PC-9 (cell line): ENCODE measurements at regions of chr6 and their contacts with region 1.

Region 1: DNA sequence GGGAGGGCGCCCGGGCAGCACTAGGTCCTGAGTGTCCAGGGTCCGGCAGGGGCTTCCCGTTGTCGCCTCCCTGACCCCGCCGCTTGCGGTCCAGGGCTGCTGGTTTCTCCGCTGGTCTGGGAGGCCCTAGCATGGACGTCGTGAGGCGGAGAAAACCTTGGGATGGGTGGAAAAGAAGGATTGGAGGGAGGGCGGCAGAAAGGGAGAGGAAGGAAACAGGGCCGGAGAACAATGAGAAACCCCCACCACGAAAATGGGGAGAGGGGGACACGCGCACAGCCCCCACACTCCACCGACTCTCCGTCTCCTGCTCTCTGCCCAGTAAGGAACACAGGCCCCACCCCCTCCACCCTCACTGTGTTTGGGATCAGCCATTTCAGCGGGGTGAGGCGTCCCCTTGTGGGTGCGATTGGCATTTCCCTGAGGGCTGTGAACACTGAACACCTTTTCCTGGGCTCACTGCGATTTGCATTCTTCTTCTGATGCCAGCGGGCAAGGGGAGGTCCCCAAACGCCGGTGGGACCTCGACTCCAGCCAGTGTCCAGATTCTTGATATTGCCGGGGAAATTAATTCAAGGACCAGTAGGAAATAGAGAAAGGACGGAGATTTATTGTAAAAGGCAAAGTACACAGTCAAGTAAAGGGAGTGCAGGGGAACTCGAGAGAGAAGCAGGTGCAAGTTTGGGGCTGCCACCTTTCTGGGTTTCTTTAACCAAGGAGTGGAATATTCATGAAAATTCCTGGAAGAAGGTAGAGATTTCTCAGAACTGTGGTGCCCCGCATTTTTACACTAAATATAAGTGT is 3.3 kb upstream of the RAET1G start:
- DNase-seq: peak; percentile 66 to 81
- H3K4me3 ChIP-seq: peak overlapping the region; percentile 62
- H3K27ac ChIP-seq: no peak overlapping the region
- H3K4me1 ChIP-seq: peaks cover 4% of the 10 kb centered on the region
- H3K27me3 ChIP-seq: no peaks in the 10 kb centered on the region
- CTCF ChIP-seq: peak; percentile 92

Region 2: GRCh38 chr6:149534742-149535141 is 391.4 kb before region 1 on chr6:
- CTCF ChIA-PET with region 1: no interaction called
- POLR2A ChIA-PET with region 1: no interaction called
- intact Hi-C with region 1: no loop called
- DNase-seq: no peak
- H3K4me3 ChIP-seq: no peak overlapping the region
- H3K27ac ChIP-seq: no peak overlapping the region
- H3K4me1 ChIP-seq: no peaks in the 10 kb centered on the region
- H3K27me3 ChIP-seq: no peaks in the 10 kb centered on the region
- CTCF ChIP-seq: no peak

Region 3: DNA sequence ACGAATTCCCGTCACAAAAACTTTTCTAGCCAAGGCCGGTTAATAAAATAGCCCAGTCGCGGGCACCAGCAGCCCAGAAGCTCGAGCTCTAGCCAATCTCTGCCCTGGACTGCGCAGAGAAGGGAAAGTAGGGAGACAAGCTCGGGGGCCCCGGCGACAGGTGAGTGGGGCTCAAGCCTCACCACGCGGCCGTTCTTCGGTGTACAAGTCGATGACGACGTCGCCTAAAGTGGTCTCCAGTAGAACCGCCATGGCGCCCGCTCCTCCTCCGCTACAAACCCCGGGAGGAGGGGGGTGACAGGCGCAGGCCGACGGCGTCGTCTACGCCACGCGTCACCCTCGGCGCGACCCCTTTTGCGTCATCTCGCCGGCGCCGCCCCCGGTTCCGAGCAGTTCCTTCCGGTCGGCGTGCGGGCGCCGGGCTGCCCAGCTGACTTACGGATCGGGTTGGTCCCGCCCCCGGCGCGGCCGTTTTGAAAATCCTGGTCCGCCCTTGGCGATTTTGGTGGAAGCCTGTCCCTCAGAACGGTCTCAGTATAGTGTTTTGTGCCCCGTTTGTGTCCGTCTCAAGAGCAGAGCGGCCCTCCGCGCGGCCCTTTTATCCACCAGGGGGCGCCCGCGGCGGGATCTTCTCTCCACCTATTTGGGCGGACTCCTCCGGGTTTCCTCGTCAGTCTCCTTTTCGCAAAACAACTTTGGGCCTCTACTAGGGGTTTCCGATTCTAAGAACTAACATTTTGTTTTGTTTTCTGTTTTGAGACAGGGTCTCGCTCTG is 380.2 kb before region 1 on chr6 and contains the start of gene PPIL4:
- CTCF ChIA-PET with region 1: interaction called, 5 read pairs
- POLR2A ChIA-PET with region 1: no interaction called
- intact Hi-C with region 1: loop called (anchors 5 kb)
- DNase-seq: peak; percentile 73 to 86
- H3K4me3 ChIP-seq: peak within 1 kb of the TSS; percentile 76
- H3K27ac ChIP-seq: peak within 1 kb of the TSS; percentile 84
- H3K4me1 ChIP-seq: peaks cover 13% of the 10 kb centered on the region
- H3K27me3 ChIP-seq: no peaks in the 10 kb centered on the region
- CTCF ChIP-seq: peak; percentile 98
- total RNA-seq, gene PPIL4: 9.6 and 13.5 TPM in 2 replicates

Region 4: GRCh38 chr6:149565527-149566409 is 360.4 kb before region 1 on chr6 and contains the start of gene GINM1:
- CTCF ChIA-PET with region 1: no interaction called
- POLR2A ChIA-PET with region 1: no interaction called
- intact Hi-C with region 1: loop called (anchors 5 kb)
- DNase-seq: peak; percentile 80 to 94
- H3K4me3 ChIP-seq: peak within 1 kb of the TSS; percentile 89
- H3K27ac ChIP-seq: peak within 1 kb of the TSS; percentile 72
- H3K4me1 ChIP-seq: peaks cover 30% of the 10 kb centered on the region
- H3K27me3 ChIP-seq: no peaks in the 10 kb centered on the region
- CTCF ChIP-seq: peak; percentile 71
- total RNA-seq, gene GINM1: 14.5 and 14.7 TPM in 2 replicates

Region 5: DNA sequence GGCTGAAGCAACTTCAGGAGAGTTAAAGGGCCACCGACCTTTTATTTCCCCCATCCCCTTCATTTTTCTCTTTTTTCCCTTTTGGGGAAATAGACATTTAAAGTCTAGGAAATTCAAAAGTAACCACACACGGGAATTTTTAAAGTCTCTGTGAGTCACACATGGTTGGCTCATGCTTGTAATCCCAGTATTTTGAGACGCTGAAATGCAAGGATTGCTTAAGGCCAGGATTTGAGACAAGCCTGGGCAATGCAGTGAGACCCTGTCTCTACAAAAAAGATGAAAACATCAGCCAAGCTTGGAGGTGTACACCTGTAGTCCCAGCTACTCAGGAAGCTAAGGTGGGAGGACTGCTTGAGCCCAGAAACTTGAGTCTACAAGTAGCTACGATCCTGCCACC is 311.8 kb before region 1 on chr6:
- CTCF ChIA-PET with region 1: no interaction called
- POLR2A ChIA-PET with region 1: no interaction called
- intact Hi-C with region 1: no loop called
- DNase-seq: no peak
- H3K4me3 ChIP-seq: no peak overlapping the region
- H3K27ac ChIP-seq: no peak overlapping the region
- H3K4me1 ChIP-seq: no peaks in the 10 kb centered on the region
- H3K27me3 ChIP-seq: no peaks in the 10 kb centered on the region
- CTCF ChIP-seq: no peak

Region 6: GRCh38 chr6:149701714-149702113 is 224.5 kb before region 1 on chr6:
- CTCF ChIA-PET with region 1: no interaction called
- POLR2A ChIA-PET with region 1: no interaction called
- intact Hi-C with region 1: no loop called
- DNase-seq: no peak
- H3K4me3 ChIP-seq: no peak overlapping the region
- H3K27ac ChIP-seq: no peak overlapping the region
- H3K4me1 ChIP-seq: no peaks in the 10 kb centered on the region
- H3K27me3 ChIP-seq: no peaks in the 10 kb centered on the region
- CTCF ChIP-seq: no peak

Region 7: DNA sequence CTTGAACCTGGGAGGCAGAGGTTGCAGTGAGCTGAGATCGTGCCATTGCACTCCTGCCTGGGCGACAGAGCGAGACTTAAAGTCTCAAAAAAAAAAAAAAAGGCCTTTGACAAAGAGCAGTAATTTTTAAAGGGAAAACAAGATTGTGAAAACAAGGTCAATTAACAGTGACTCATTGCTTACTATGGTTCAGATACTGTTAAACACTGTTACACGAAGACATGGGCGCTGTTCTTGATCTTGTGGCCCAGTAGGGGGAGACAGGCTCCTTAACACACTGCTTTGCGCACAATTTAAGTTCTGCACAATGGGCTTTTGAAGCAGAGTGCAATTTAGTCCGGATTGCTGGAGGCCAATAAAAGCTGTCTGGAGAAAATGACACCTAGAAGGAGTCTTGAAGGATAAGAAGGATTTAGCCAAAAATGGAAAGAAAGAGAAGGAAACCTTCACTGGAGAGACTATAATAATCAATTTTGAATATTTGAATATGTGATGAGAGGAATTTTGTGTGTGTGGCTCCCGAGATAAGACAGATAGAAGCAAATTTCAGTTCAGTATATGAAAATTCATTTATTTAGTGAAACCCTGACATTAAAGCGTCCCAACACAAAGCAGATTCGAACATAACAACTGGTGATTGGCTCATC is 202.3 kb before region 1 on chr6:
- CTCF ChIA-PET with region 1: interaction called, 4 read pairs
- POLR2A ChIA-PET with region 1: no interaction called
- intact Hi-C with region 1: loop called (anchors 5 kb)
- DNase-seq: peak; percentile 11 to 51
- H3K4me3 ChIP-seq: no peak overlapping the region
- H3K27ac ChIP-seq: no peak overlapping the region
- H3K4me1 ChIP-seq: 0 out of 2 replicates have a peak, but pooled peaks cover 5% of the 10 kb centered on the region
- H3K27me3 ChIP-seq: no peaks in the 10 kb centered on the region
- CTCF ChIP-seq: peak; percentile 66

Region 8: DNA sequence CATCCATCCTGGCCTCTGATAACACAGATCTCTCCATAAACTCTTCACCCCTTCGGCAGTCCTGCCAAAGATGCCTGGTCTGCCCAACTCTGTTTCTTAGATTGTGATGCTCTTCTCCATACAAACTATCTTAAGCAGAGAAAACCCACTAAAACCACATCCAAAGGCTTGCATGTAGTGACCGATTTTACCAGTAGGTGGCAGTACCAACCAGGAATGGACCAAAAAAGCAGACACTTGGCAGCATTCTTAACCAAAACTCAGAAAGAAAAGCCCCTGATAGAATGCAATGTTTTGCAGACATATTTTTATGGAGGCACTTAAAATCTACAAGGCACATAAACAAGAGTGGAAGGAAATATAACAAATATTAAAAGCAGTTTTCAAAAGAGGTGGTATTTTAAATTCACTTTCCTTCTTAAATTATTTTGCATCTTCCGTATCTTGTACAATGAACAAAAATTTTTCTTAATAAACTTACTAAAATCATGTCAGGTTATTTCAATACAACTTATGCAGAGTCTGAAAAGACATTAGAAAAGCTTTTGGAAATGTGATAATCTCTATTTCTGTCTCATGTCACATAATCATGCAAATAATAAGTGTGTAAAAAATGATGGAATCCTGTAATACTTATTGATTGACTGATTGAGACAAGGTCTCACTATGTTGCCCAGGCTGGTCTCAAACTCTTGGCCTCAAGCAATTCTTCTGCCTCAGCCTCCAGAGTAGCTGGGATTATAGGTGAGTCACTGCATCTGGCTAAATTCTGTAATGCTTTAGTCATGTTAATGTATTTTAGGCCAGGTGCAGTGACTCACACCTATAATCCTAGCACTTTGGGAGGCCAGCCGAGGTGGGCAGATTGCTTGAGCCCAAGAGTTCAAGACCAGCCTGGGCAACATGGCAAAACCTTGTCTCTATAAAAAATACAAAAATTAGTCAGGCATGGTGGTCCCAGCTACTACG is 91.4 kb before region 1 on chr6:
- CTCF ChIA-PET with region 1: no interaction called
- POLR2A ChIA-PET with region 1: no interaction called
- intact Hi-C with region 1: loop called (anchors 1 kb)
- DNase-seq: peak; percentile 48 to 79
- H3K4me3 ChIP-seq: no peak overlapping the region
- H3K27ac ChIP-seq: peak overlapping the region; percentile 45
- H3K4me1 ChIP-seq: no peaks in the 10 kb centered on the region
- H3K27me3 ChIP-seq: no peaks in the 10 kb centered on the region
- CTCF ChIP-seq: peak; percentile 96

Region 9: GRCh38 chr6:149840345-149841075 is 85.7 kb before region 1 on chr6:
- CTCF ChIA-PET with region 1: interaction called, 3 read pairs
- POLR2A ChIA-PET with region 1: interaction called, 3 read pairs
- intact Hi-C with region 1: loop called (anchors 1 kb)
- DNase-seq: peak; percentile 70 to 78
- H3K4me3 ChIP-seq: no peak overlapping the region
- H3K27ac ChIP-seq: 0 out of 2 replicates have a peak overlapping the region, but pooled peaks have one; percentile 3
- H3K4me1 ChIP-seq: peaks cover 48% of the 10 kb centered on the region
- H3K27me3 ChIP-seq: no peaks in the 10 kb centered on the region
- CTCF ChIP-seq: peak; percentile 83